ENCODE measurements at regions of chr3 and their contacts with region 1.

Region 1: DNA sequence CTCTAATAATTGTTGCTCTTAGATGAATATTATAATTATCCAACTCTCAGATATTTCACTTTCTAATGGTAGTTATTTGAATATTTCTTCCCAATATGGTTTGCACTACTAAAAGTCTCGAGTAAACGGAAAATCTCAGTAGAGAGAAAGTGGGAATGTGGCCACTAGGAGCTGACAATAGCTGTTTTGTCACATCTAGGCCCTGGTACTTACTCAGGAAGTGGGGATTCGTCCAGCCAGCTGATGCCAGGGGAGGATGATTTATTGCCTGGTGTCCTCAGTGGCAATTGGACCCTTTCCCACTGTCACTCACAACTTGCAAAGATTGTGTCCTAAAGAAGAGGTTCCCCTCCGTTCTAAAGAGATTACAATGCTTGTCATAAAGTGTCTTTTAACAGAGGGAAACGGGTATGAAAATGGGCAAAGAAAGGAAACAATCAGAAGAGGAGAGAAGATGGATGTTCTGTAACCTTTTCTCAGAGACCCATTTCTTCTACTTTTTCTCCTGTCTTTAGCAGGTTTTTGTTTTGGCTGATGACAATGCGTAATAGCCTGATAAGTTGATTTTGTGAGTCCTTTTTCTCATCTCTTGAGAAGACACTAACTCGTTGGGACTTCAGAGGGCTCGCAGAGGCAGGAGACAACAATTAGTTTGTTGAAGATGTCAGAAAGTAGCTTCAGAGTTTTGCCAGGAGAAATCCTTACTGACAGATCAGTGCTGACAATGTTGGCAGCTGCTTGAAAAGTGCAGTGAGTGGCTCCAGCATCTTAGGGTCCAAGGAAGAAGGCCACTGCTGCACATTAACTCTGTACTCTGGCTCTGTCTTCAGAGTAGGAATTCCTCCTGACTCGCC is 320.6 kb downstream of the MECOM start:
- DNase-seq: no peak
- H3K4me3 ChIP-seq: no peak overlapping the region
- H3K27ac ChIP-seq: no peak overlapping the region
- H3K4me1 ChIP-seq: peaks cover 38% of the 10 kb centered on the region
- H3K27me3 ChIP-seq: no peaks in the 10 kb centered on the region
- CTCF ChIP-seq: no peak

Region 2: DNA sequence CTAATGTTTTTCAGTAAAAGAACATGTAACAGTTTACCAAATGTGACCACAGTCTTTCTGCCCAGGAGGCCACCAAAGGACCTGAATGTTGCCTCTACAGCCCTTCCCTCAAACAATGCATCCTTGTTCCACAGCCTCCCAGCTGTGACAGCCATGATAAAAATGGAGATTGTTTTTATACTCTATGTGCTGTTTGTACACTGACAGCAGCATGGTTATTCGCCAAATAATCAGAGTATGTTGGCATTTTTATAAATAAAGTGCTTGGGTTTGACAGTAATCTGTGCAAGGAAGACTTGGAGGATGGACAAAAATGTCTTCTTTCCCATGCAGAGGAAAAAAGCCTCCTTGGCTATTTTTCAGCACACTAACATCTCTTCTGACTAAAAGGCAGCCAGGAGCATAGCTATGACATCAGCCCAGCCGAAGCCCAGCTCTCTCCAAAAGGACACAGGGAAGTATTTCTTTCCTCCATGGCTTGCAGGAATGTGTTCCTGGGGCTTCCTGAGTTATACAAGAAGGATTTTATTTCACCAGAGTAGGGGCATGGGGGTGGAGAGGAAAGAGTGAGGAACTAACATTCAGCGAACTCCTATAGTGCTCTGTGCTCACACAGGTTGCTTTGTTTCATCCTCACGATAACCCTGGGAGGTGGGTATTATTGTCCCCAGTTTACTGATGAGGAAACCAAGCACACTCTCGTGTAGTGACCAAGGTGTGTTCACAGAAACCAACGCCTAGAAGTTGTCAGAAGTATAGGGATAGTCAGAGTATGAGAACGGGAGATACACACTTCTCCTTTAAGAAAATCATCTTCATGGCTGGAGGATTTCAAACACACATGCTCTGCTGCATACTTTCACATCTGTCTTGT is 19.1 kb before region 1 on chr3:
- CTCF ChIA-PET with region 1: no interaction called
- POLR2A ChIA-PET with region 1: interaction called, 5 read pairs
- intact Hi-C with region 1: loop called (anchors 1 kb)
- DNase-seq: no peak
- H3K4me3 ChIP-seq: no peak overlapping the region
- H3K27ac ChIP-seq: no peak overlapping the region
- H3K4me1 ChIP-seq: peaks cover 70% of the 10 kb centered on the region
- H3K27me3 ChIP-seq: no peaks in the 10 kb centered on the region
- CTCF ChIP-seq: no peak

Region 3: GRCh38 chr3:170062769-170063168 is 719.9 kb after region 1 on chr3:
- CTCF ChIA-PET with region 1: no interaction called
- POLR2A ChIA-PET with region 1: no interaction called
- intact Hi-C with region 1: no loop called
- DNase-seq: no peak
- H3K4me3 ChIP-seq: no peak overlapping the region
- H3K27ac ChIP-seq: no peak overlapping the region
- H3K4me1 ChIP-seq: no peaks in the 10 kb centered on the region
- H3K27me3 ChIP-seq: no peaks in the 10 kb centered on the region
- CTCF ChIP-seq: peak; percentile 39; the same call in 1 of the 2 replicates